Activated CD8-positive, alpha-beta T cell treated with anti-CD3 and anti-CD28 coated beads for 36 hours (primary cell): ENCODE measurements at regions of chr16 and their contacts with region 1.

Region 1: DNA sequence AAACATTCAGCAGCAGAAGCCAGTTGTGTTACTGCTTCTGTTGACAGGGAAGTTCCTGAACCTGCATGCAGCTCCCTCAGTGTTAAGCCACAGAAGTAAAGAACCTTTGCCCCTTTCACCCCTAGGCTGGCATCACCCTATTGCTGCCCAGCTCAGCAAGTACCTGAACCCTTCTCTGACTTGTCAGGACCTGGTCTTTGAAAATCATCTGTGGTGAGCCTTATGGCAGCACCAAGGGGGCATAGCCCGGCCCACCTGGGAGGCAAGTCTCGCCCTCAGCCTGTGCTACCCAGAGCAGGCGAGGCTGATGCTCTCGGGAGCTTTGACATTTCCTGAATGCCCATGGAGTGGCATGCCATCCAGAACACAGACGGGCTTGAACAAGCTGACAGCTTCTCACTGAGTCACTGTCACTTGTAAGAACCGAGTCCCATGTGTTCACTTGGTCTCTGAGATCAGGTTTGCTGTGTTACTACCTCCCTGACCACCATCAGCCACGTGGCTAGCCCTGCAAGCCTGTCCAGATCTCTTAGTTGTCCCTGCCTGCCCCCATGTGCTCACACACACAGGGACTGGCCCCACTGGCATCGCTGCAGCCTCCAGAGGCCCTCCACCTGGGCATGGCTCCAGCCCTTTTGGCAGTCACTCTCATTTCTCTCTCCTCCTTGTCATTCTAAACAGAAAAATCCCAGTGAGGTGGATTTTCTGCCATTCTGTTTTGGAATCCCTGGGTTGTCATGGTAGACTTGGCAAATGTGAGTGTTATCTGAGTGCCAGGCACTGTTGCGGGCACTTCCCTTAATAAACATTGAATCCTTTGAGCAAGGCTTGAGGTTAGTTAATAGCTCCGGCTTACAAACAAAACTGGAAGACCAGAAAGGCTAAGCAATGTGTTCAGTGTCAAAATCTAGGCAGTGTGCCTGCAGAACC is 2.9 kb upstream of the CARMIL2 start:
- DNase-seq: no peak
- ATAC-seq: no peak
- H3K4me3 Mint-ChIP-seq: no peak overlapping the region
- H3K27ac Mint-ChIP-seq: no peak overlapping the region
- H3K4me1 Mint-ChIP-seq: peaks cover 11% of the 10 kb centered on the region
- H3K27me3 Mint-ChIP-seq: no peaks in the 10 kb centered on the region
- CTCF ChIP-seq: no peak

Region 2: DNA sequence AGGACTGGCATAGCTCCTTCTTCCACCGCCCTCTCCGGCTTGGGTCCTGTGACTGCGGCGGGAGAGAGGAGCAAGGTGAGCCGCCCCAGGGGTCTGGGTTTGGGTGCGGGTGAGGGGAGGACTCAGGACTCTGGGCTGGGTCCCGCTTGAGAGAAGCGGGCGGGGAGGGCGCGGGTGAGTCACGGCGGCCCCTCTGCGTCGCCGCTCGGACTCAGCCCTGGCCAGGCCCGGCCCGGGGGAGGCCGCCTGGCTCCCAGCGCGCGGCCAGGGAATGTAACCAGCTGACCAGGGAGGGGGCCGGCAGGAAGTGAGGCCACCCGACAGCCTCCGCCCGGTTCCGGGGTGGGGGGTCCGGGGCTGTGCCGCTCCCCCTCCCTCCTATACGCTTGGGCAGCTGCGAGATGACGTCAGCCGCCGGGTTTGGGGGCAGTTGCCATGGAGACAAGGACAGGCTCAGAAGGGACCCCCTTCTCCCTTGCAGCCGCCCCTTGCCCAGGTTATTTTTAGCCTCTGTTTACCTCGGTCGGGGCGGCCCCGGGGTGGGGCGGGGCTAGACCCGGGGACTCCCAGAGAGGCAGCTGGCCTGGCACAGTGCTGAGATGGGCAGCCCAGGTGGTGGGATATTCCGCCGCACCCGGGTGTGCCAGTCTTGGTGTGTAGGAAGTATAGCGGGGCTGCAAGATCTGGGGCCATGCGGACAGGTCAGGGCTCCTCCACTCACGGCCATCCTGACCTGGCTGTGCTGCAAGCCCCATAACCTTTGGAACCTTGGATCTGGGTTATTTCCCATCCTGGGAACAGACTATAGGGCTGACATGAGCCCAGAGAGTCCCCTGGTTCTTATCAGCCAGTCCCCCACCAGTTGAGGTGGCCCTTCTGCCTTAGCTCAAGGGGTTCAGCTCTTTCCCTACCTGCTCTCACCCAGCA is 111.8 kb before region 1 on chr16:
- CTCF ChIA-PET with region 1: interaction called, 17 read pairs
- POLR2A ChIA-PET with region 1: interaction called, 6 read pairs
- intact Hi-C with region 1: no loop called
- DNase-seq: peak; percentile 42
- ATAC-seq: peak; percentile 47
- H3K4me3 Mint-ChIP-seq: peak overlapping the region; percentile 68
- H3K27ac Mint-ChIP-seq: no peak overlapping the region
- H3K4me1 Mint-ChIP-seq: peaks cover 15% of the 10 kb centered on the region
- H3K27me3 Mint-ChIP-seq: peaks cover 27% of the 10 kb centered on the region
- CTCF ChIP-seq: no peak

Region 3: DNA sequence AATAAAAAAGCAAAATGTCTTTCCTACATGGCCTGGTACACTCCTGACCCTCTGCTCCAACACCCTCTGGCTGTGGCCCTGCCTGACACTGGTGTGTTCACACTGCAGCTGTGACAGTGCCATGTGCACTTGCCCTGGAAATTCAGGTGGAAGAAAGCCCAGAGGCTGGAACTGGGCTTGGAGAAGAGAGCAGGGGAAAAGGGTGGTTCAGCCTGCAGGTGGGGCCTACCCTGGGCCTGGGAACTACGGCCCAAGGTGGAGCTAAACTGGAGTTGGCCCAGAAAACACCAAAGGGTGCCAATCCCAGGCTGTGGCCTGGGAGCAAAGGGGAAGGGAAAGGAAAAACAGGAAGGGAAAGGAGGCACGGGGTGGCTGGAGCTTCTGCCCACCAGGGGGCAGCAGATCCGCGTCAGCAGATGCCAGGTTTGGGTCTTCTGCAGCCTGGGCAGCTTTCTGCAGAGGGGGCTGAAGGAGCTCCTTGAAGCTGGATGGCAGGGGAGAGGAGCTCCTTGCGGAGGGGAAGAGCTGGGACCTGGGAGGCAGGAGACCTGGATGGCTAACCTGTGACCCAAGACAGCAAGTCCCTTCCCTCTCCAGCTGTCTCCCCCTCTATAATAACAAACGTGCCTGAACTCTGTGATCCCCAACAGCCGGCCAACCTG is 95.2 kb before region 1 on chr16:
- CTCF ChIA-PET with region 1: interaction called, 224 read pairs
- POLR2A ChIA-PET with region 1: interaction called, 40 read pairs
- intact Hi-C with region 1: loop called (anchors 2 kb)
- DNase-seq: peak; percentile 79
- ATAC-seq: peak; percentile 32
- H3K4me3 Mint-ChIP-seq: no peak overlapping the region
- H3K27ac Mint-ChIP-seq: peak overlapping the region; percentile 90
- H3K4me1 Mint-ChIP-seq: peaks cover 40% of the 10 kb centered on the region
- H3K27me3 Mint-ChIP-seq: no peaks in the 10 kb centered on the region
- CTCF ChIP-seq: peak; percentile 99

Region 4: GRCh38 chr16:67561824-67562525 is 80.1 kb before region 1 on chr16:
- CTCF ChIA-PET with region 1: interaction called, 43 read pairs
- POLR2A ChIA-PET with region 1: interaction called, 22 read pairs
- intact Hi-C with region 1: no loop called
- DNase-seq: peak; percentile 98
- ATAC-seq: peak; percentile 88
- H3K4me3 Mint-ChIP-seq: peak overlapping the region; percentile 82
- H3K27ac Mint-ChIP-seq: peak overlapping the region; percentile 91
- H3K4me1 Mint-ChIP-seq: peaks cover 44% of the 10 kb centered on the region
- H3K27me3 Mint-ChIP-seq: no peaks in the 10 kb centered on the region
- CTCF ChIP-seq: no peak

Region 5: DNA sequence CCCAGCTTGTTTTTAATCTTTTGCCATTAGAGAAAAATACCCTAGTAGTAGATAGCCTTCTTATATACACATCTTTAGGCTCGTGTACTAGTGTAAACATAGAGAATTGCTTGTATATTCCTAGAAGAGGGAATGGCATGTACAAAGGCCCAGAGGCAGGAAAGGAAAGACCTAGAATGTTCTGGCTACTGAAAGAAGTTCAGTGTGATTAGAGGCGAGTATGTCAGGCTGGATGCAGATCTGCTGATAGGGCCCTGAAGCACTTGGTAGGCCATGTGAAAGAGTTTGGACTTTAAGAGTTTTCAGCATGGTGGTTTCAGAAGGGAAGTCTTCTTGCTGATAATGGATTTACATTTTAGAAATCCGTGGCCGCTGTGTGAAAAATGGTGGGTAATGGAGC is 62.4 kb before region 1 on chr16:
- CTCF ChIA-PET with region 1: interaction called, 10 read pairs
- POLR2A ChIA-PET with region 1: no interaction called
- intact Hi-C with region 1: no loop called
- DNase-seq: no peak
- ATAC-seq: no peak
- H3K4me3 Mint-ChIP-seq: no peak overlapping the region
- H3K27ac Mint-ChIP-seq: peak overlapping the region; percentile 47
- H3K4me1 Mint-ChIP-seq: peaks cover 15% of the 10 kb centered on the region
- H3K27me3 Mint-ChIP-seq: no peaks in the 10 kb centered on the region
- CTCF ChIP-seq: no peak

Region 6: DNA sequence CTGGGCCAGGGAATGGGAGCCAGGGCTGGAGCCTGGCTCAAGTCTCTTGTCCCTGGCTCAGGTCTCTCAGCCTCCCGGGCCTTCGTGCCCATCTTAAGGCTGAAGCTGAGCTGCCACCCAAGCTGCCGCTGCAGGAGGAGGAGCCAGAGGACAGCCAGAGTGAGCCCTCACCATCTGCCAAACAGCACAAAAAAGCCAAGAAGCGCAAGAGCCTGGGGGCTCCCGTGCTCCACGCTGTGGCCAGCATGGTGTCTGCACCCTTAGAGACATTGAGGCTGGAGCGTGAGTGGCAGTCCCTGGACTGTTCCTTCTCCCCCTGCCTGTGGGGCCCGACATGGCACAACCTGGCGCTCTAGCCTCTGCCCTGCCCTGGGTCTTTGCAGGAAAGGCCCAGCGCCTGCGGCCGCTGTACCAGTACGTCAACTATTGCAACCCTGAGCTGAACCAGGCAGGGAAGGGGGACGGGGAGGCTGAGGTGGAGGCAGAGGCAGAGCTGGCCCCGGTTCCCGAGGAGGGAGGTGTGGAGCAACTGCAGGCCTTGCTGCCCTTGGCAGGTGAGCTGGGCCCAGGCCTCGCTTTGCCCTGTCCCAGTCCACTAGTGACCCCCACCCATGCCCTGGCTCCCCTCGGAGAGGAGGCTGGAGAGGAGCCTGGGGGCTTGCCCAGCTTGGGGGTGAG is 25.9 kb after region 1 on chr16:
- CTCF ChIA-PET with region 1: interaction called, 51 read pairs
- POLR2A ChIA-PET with region 1: interaction called, 14 read pairs
- intact Hi-C with region 1: no loop called
- DNase-seq: peak; percentile 92
- ATAC-seq: peak; percentile 92
- H3K4me3 Mint-ChIP-seq: peak overlapping the region; percentile 80
- H3K27ac Mint-ChIP-seq: no peak overlapping the region
- H3K4me1 Mint-ChIP-seq: peaks cover 11% of the 10 kb centered on the region
- H3K27me3 Mint-ChIP-seq: no peaks in the 10 kb centered on the region
- CTCF ChIP-seq: peak; percentile 73